Calu3 (cell line): ENCODE measurements at regions of chr12 and their contacts with region 1.

Region 1: GRCh38 chr12:1583421-1584078 is 10.8 kb downstream of the FBXL14 start:
- DNase-seq: peak; percentile 73
- H3K4me3 Mint-ChIP-seq: no peak overlapping the region
- H3K27ac Mint-ChIP-seq: no peak overlapping the region
- H3K4me1 Mint-ChIP-seq: peaks cover 3% of the 10 kb centered on the region
- H3K27me3 Mint-ChIP-seq: no peaks in the 10 kb centered on the region
- CTCF ChIP-seq: peak; percentile 75

Region 2: DNA sequence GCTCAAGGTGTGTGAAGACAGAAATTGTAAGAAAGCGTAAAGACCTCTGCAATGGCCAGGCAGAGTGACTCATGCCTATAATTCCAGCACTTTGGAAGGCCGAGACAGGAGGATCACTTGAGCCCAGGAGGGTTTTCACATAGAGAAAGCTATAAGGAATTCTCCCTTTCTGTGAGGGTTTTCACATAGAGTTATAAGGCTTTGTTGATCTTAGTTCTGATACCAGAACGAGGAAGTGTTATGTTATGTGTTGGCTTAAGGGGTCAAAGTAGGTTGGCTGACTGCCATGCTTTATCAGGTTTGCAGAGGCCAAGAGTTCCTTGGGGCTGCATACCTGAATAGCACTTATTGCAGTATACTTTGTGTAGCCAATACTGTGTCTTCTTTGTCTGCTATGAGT is 453.4 kb before region 1 on chr12:
- CTCF ChIA-PET with region 1: interaction called, 10 read pairs
- intact Hi-C with region 1: no loop called
- DNase-seq: peak; percentile 75
- H3K4me3 Mint-ChIP-seq: peak overlapping the region; percentile 45
- H3K27ac Mint-ChIP-seq: peak overlapping the region; percentile 79
- H3K4me1 Mint-ChIP-seq: peaks cover 55% of the 10 kb centered on the region
- H3K27me3 Mint-ChIP-seq: no peaks in the 10 kb centered on the region
- CTCF ChIP-seq: no peak

Region 3: DNA sequence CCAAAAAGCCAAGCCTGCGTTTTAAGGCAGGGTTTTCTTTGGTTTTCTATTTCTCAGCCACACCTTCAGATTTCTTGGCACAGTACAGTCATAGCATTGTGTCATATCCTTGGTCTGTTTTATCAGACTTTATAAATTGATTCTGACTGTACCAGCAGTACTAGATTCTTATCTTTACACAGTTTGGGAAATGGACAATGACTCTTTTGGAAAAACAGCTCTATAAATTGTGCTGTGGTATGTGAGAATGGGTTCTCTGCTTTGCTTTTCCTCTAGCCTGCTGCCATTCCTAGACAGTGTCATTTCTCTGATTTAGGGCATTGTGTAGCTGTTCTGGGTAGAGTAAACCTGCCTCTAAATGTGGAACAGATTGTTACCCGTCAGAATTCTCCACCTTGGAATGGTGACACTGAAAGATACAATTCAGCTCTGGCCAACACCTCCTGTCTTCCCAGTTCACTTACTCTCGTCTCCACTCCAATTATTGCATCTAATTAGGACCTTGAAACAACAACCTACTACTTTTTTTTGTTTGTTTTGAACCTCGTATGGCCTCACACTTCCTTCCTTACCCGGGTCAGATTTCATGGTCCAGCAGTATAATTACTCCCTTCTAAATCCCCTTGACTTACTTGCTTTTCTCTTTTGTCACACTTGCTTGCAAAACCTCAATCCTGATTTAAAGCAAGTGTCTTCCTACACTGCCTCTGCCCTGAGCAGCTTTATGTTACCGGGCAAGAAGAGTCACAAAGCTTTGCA is 366.2 kb before region 1 on chr12:
- CTCF ChIA-PET with region 1: no interaction called
- intact Hi-C with region 1: loop called (anchors 10 kb)
- DNase-seq: peak; percentile 13
- H3K4me3 Mint-ChIP-seq: no peak overlapping the region
- H3K27ac Mint-ChIP-seq: no peak overlapping the region
- H3K4me1 Mint-ChIP-seq: peaks cover 1% of the 10 kb centered on the region
- H3K27me3 Mint-ChIP-seq: no peaks in the 10 kb centered on the region
- CTCF ChIP-seq: no peak

Region 4: DNA sequence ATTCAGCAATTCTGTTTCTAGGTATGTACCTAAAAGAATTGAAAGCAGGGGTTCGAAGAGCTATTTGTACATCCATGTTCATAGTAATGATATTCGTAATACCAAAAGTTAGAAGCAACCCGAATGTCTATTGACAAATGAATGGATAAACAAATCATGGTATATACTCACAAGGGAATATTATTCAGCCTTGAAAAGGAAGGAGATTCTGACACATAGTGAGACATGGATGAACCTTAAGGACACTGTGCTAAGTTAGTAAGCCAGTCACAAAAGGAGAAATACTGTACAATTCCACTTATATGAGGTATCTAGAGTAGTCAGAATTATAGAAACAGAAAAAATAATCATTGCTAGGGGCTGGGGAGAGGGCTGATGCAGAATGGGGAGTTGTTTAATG is 15.2 kb after region 1 on chr12:
- CTCF ChIA-PET with region 1: interaction called, 10 read pairs
- intact Hi-C with region 1: no loop called
- DNase-seq: no peak
- H3K4me3 Mint-ChIP-seq: no peak overlapping the region
- H3K27ac Mint-ChIP-seq: no peak overlapping the region
- H3K4me1 Mint-ChIP-seq: peaks cover 11% of the 10 kb centered on the region
- H3K27me3 Mint-ChIP-seq: no peaks in the 10 kb centered on the region
- CTCF ChIP-seq: no peak

Region 5: GRCh38 chr12:1661553-1662335 is 78.2 kb after region 1 on chr12:
- CTCF ChIA-PET with region 1: no interaction called
- intact Hi-C with region 1: no loop called
- DNase-seq: peak; percentile 95
- H3K4me3 Mint-ChIP-seq: peak overlapping the region; percentile 60
- H3K27ac Mint-ChIP-seq: peak overlapping the region; percentile 81
- H3K4me1 Mint-ChIP-seq: peaks cover 25% of the 10 kb centered on the region
- H3K27me3 Mint-ChIP-seq: no peaks in the 10 kb centered on the region
- CTCF ChIP-seq: no peak